Colonic mucosa (tissue), 4 donors: ENCODE measurements at regions of chr14 and their contacts with region 1.

Region 1: GRCh38 chr14:92686900-92687444 is 61.5 kb downstream of the LGMN start:
- DNase-seq: peak; percentile 84
- H3K4me3 ChIP-seq: peak overlapping the region; percentile 32
- H3K27ac ChIP-seq: no peak overlapping the region
- H3K4me1 ChIP-seq: peaks cover 7% of the 10 kb centered on the region
- H3K27me3 ChIP-seq: no peaks in the 10 kb centered on the region
- CTCF ChIP-seq: peak; percentile 100

Region 2: DNA sequence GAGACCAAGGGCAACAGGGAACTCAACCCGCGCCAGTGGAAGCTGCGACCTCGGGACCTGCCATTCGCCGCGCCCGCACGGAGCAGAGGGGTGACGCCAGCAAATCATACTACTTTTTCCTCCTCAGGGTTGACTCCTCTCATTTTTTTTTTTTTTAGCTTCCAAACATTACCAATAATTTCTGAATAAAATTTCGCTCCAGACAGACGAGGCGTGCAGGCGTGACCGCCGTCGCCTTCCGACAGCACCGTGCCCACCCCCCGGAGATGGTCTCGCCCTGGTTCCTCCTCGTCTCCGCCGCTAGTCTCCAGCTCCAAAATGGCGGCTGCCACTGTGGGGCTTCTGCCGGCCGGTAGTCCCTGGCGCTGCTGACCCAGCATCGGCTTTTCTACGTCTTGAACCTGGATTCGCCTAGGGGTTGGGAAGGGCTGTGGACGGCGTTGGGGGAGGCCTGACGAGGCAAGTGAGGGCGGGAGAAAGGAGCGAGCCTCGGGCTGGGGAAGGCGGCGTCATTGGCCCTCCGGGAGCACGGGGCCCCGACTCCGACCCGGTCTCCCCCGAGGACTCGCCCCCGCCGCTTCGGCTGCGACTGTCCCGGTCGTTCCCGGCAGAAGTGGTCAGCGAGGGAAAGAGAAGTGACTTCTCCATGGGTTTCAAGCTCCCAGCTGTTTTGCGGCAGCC is 565.2 kb before region 1 on chr14 and contains the starts of genes CPSF2 and NDUFB1:
- intact Hi-C with region 1: loop called (anchors 10 kb)
- DNase-seq: peak; percentile 91
- H3K4me3 ChIP-seq: peak within 1 kb of the TSS; percentile 94
- H3K27ac ChIP-seq: peak within 1 kb of the TSS; percentile 81
- H3K4me1 ChIP-seq: no peaks in the 10 kb centered on the region
- H3K27me3 ChIP-seq: no peaks in the 10 kb centered on the region
- CTCF ChIP-seq: no peak
- total RNA-seq, gene CPSF2: 59.8 to 64.6 TPM
- total RNA-seq, gene NDUFB1: 167 to 185 TPM